ENCODE measurements at regions of chr1 and their contacts with region 1.

Region 1: GRCh38 chr1:226201029-226201593 is 14.6 kb upstream of the ACBD3 start:
- DNase-seq: no peak

Region 2: DNA sequence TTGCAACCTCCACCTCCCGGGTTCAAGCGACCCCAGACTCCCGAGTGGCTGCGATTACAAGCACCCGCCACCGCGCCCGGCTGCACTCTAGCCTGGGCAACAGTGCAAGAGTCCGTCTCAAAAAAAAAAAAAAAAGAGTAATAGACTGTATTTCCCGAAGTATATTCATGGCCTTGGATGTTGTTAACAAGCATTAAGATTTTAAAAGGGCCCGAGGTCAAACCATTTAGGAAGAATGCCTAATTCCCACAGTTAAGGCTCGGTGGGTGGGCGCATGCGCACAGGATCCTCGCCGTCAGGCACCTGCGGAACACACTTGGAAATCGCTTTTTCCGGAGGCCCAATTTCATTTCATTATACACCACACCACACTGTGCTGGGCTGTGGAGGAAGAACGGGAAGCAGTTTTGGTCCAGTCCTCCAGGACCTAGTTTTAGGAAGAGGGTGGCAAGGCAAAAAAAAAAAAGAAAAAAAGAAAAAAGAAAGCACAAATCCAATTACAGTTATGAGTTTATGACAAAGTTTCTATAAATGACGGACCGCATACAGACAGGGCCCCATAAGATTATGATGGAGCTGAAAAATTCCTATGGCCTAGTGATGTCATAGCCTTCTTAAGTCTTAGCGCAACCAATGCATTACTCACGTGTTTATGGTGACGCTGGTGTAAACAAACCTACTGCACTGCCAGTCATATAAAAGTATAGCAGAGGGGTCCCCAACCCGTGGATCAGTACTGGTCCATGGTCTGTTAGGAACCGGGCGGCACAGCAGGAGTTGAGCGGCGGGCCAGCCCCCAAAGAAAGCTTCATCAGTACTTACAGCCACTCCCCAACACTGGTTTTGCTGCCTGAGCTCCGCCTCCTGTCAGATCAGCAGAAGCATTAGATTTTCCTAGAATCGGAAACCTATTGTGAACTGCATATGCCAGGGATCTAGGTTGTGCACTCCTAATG is 100.4 kb before region 1 on chr1:
- intact Hi-C with region 1: no loop called
- DNase-seq: no peak

Region 3: GRCh38 chr1:226149806-226150205 is 51.3 kb before region 1 on chr1:
- intact Hi-C with region 1: no loop called
- DNase-seq: no peak

Region 4: GRCh38 chr1:226332947-226333346 is 131.8 kb after region 1 on chr1:
- intact Hi-C with region 1: loop called (anchors 5 kb)
- DNase-seq: no peak

Measured in cardiac septum (tissue), 1 donor.